Dorsolateral prefrontal cortex (tissue), 120 donors: ENCODE measurements at regions of chr6 and their contacts with region 1.

Region 1: DNA sequence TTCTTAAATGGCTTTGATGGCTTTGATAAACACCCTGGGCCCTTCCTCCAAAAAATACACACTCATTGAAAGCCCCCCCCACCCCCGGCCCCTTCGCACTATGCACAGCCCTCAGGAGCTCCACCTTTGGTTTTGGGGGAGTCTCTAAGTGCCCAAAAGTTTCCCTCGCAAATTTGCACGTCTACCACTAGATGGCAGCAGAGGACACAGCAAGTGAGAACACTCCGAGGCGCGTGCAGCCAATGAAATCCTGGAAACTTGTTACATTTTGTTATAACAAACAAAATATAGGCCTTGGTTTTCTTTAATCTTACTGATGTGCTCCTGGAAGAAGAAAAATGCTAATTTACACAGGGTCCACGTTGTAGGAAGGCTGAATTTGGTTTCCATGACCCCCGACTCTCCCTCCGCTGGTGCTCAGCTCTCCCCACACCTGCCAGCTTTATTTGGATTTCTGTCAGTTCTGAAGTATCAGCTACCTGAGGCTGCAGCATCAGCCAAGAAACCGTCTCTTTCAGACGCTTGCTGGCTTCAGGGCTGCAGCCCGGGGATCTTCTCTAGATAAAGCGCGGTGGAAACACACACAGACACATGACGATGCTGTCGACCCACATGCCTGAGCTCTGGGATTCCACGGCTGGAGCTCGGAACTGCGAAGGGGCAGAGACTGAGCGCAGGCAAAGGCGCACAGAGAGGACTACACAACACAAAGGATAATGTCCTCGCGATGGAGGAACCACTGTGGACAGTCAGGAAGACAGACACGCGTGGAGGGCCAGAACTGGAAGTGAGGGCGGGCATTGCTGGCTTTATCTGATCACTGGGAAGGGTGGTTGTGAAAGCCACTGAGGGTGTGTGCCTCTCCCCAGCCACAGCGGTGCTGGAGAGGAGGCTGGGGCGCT is 148.4 kb upstream of the RPS6KA2 start:
- DNase-seq: peak in 7 of 10 donors; percentile 39 to 77 (median 57)
- H3K4me3 ChIP-seq: no peak overlapping the region
- H3K27ac ChIP-seq: no peak overlapping the region
- H3K27me3 ChIP-seq: no peaks in the 10 kb centered on the region
- CTCF ChIP-seq: peak; percentile 68 to 92 (median 84)

Region 2: GRCh38 chr6:166614589-166614988 is 160.8 kb before region 1 on chr6:
- intact Hi-C with region 1: no loop called
- DNase-seq: no peak
- H3K4me3 ChIP-seq: peak overlapping the region in 1 of 59 donors; percentile 19
- H3K27ac ChIP-seq: peak overlapping the region in 41 of 59 donors; percentile 4 to 72 (median 40)
- H3K27me3 ChIP-seq: no peaks in the 10 kb centered on the region
- CTCF ChIP-seq: no peak

Region 3: DNA sequence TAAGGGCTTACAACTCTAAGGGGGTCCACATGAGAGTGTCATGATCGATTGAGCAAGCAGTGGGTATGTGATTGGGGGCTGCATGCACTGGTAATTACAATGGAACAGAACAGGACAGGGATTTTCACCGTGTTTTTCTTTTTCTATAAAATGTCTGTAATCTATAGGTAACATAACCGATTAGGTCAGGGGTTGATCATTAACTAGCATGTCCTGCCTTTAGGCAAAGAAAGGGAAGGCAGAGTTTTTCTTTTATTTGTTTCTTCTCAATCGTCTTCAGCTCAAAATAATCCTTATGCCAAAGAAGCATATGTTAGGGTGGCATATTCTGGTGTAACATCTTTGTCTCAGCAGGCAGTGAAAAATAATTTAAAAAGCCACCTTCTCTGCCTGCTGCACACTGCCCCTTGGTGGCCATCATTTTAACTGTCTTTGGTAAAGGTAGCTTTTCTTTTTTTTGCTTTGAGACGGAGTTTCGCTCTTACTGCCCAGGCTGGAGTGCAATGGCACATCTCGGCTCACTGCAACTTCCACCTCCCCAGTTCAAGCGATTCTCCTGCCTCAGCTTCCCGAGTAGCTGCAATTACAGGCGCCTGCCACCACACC is 214.1 kb after region 1 on chr6:
- intact Hi-C with region 1: loop called (anchors 2 kb)
- DNase-seq: peak in 2 of 10 donors; percentile 12 to 43
- H3K4me3 ChIP-seq: no peak overlapping the region
- H3K27ac ChIP-seq: no peak overlapping the region
- H3K27me3 ChIP-seq: no peaks in the 10 kb centered on the region
- CTCF ChIP-seq: peak in 55 of 56 donors; percentile 30 to 73 (median 55)

Region 4: GRCh38 chr6:167141667-167142432 is 366.4 kb after region 1 on chr6:
- intact Hi-C with region 1: loop called (anchors 2 to 5 kb)
- DNase-seq: peak in 6 of 10 donors; percentile 21 to 73 (median 44)
- H3K4me3 ChIP-seq: no peak overlapping the region
- H3K27ac ChIP-seq: peak overlapping the region in 17 of 59 donors; percentile 6 to 66 (median 51)
- H3K27me3 ChIP-seq: peaks cover 0 to 44% (median 3%) of the 10 kb centered on the region in 45 donors
- CTCF ChIP-seq: peak; percentile 11 to 80 (median 61)